Heart right ventricle (tissue), 16 donors: ENCODE measurements at regions of chr5 and their contacts with region 1.

Region 1: GRCh38 chr5:115551415-115551814 is 6.8 kb upstream of the FEM1C start:
- DNase-seq: no peak
- ATAC-seq: peak in 6 of 8 donors; percentile 21 to 61 (median 34)
- H3K4me3 ChIP-seq: no peak overlapping the region
- H3K27ac ChIP-seq: no peak overlapping the region
- H3K4me1 ChIP-seq: no peaks in the 10 kb centered on the region
- H3K27me3 ChIP-seq: no peaks in the 10 kb centered on the region
- CTCF ChIP-seq: no peak

Region 2: DNA sequence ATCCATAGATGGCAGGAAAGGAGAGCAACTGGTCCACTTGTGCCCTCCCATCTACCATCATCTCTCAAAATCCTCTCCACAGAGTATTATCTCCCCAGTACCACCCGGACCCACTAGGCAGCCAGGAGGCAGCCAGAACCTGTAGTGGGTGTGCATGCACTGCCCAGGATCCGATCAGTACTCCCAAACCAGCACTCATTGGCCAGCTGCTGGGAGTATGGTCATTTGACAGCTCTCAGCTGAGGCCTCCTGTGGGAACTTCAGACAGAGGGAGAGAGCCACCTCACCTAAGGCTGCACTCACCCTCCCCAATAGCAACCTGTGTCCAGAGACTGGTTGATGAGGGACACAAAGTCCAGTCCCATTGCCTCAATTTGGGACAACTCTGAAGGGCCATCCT is 667.7 kb before region 1 on chr5:
- intact Hi-C with region 1: no loop called
- DNase-seq: no peak
- ATAC-seq: no peak
- H3K4me3 ChIP-seq: no peak overlapping the region
- H3K27ac ChIP-seq: no peak overlapping the region
- H3K4me1 ChIP-seq: no peaks in the 10 kb centered on the region
- H3K27me3 ChIP-seq: no peaks in the 10 kb centered on the region
- CTCF ChIP-seq: no peak

Region 3: GRCh38 chr5:115389799-115390382 is 161.5 kb before region 1 on chr5:
- intact Hi-C with region 1: loop called in 3 of 10 experiments (anchors 10 kb)
- DNase-seq: no peak
- ATAC-seq: peak in 4 of 8 donors; percentile 32 to 69 (median 52)
- H3K4me3 ChIP-seq: no peak overlapping the region
- H3K27ac ChIP-seq: no peak overlapping the region
- H3K4me1 ChIP-seq: peaks cover 0 to 11% (median 4%) of the 10 kb centered on the region in 9 donors
- H3K27me3 ChIP-seq: no peaks in the 10 kb centered on the region
- CTCF ChIP-seq: peak in 4 of 9 donors; percentile 19 to 35 (median 32)

Region 4: GRCh38 chr5:115735108-115735998 is 183.9 kb after region 1 on chr5:
- intact Hi-C with region 1: no loop called
- DNase-seq: no peak
- ATAC-seq: peak in 1 of 8 donors; percentile 79
- H3K4me3 ChIP-seq: no peak overlapping the region
- H3K27ac ChIP-seq: no peak overlapping the region
- H3K4me1 ChIP-seq: no peaks in the 10 kb centered on the region
- H3K27me3 ChIP-seq: no peaks in the 10 kb centered on the region
- CTCF ChIP-seq: no peak